ENCODE measurements at regions of chr1 and their contacts with region 1.

Region 1: GRCh38 chr1:17451731-17452130 is 12.3 kb upstream of the RCC2 start:
- DNase-seq: no peak
- ATAC-seq: no peak; the same call in 1 of the 2 replicates
- H3K4me3 ChIP-seq: no peak overlapping the region
- H3K27ac ChIP-seq: no peak overlapping the region
- H3K4me1 ChIP-seq: peaks cover 0 to 6% of the 10 kb centered on the region in 2 experiments; a peak in 1 of 4 replicates
- H3K27me3 ChIP-seq: no peaks in the 10 kb centered on the region
- CTCF ChIP-seq: no peak
- POLR2A ChIP-seq: no peak
- RAD21 ChIP-seq: no peak

Region 2: GRCh38 chr1:17119076-17119772 is 332.5 kb before region 1 on chr1 and contains the start of gene PADI2:
- CTCF ChIA-PET with region 1: no interaction called
- POLR2A ChIA-PET with region 1: no interaction called
- RAD21 ChIA-PET with region 1: no interaction called
- intact Hi-C with region 1: no loop called
- DNase-seq: peak; percentile 34
- ATAC-seq: peak; percentile 99
- H3K4me3 ChIP-seq: peak within 1 kb of the TSS in 1 of 2 experiments; percentile 45; a peak in 3 of 4 replicates
- H3K27ac ChIP-seq: no peak within 1 kb of the TSS
- H3K4me1 ChIP-seq: peaks cover 0 to 13% of the 10 kb centered on the region in 2 experiments; a peak in 3 of 4 replicates
- H3K27me3 ChIP-seq: no peaks in the 10 kb centered on the region; the same call in 1 of the 2 replicates
- CTCF ChIP-seq: no peak
- POLR2A ChIP-seq: no peak
- RAD21 ChIP-seq: no peak
- total RNA-seq, gene PADI2: 2.7 TPM

Region 3: GRCh38 chr1:17439250-17440073 is 12.3 kb before region 1 on chr1 and contains the start of gene RCC2:
- CTCF ChIA-PET with region 1: interaction called, 8 read pairs
- POLR2A ChIA-PET with region 1: interaction called, 18 read pairs
- RAD21 ChIA-PET with region 1: no interaction called
- intact Hi-C with region 1: no loop called
- DNase-seq: peak; percentile 43
- ATAC-seq: peak; percentile 76
- H3K4me3 ChIP-seq: peak within 1 kb of the TSS; percentile 94 to 98
- H3K27ac ChIP-seq: peak within 1 kb of the TSS; percentile 98
- H3K4me1 ChIP-seq: peaks cover 49 to 55% of the 10 kb centered on the region in 2 experiments
- H3K27me3 ChIP-seq: no peaks in the 10 kb centered on the region
- CTCF ChIP-seq: peak in 1 of 3 experiments; percentile 6; a peak in 1 of 6 replicates
- POLR2A ChIP-seq: peak; percentile 71
- RAD21 ChIP-seq: no peak
- total RNA-seq, gene RCC2: 178 TPM

Region 4: GRCh38 chr1:17494114-17494729 is 42.5 kb after region 1 on chr1:
- CTCF ChIA-PET with region 1: no interaction called
- POLR2A ChIA-PET with region 1: no interaction called
- RAD21 ChIA-PET with region 1: no interaction called
- intact Hi-C with region 1: no loop called
- DNase-seq: peak; percentile 86
- ATAC-seq: peak; percentile 94
- H3K4me3 ChIP-seq: no peak overlapping the region
- H3K27ac ChIP-seq: no peak overlapping the region
- H3K4me1 ChIP-seq: peaks cover 21 to 44% of the 10 kb centered on the region in 2 experiments; a peak in 3 of 4 replicates
- H3K27me3 ChIP-seq: no peaks in the 10 kb centered on the region
- CTCF ChIP-seq: peak; percentile 97 to 99 (median 98)
- POLR2A ChIP-seq: no peak
- RAD21 ChIP-seq: peak; percentile 98

Region 5: DNA sequence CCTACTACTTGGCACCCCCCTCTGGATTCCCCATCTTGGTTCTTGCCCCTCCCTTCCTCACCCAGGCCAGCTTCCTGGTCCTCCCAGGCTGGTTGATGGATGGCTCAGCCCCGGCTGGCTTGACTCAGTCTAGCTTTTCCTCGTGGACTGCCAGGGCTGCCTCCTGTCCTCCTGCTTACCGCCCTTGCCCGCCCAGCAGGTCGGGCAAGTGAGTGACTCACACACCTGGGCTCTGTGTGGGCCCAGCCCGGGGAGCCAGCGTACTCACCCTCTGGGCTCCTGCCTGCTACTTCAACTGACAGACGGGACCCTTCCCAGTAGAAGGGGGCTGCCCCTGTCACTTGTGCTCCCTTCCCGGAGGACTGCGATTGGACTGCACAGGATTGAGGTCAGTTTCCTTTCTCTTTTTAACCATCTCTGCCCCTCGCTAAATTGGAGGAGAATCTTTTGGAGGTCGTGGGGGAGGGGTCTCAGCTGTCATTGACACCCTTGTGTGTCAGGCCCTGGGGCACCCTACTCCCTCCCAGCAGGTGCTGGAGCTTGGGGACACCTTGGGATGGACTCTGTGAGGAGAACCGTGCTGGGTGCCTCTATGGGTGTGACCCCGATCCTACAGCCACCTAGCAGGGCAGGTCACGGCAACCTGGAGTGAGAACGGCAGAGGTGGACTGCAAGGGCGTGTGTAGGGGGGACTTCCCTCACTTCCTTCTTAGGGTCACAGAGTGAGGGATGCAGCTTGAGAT is 68.5 kb after region 1 on chr1:
- CTCF ChIA-PET with region 1: no interaction called
- POLR2A ChIA-PET with region 1: no interaction called
- RAD21 ChIA-PET with region 1: no interaction called
- intact Hi-C with region 1: no loop called
- DNase-seq: peak; percentile 80
- ATAC-seq: peak; percentile 88
- H3K4me3 ChIP-seq: peak overlapping the region; percentile 29 to 45
- H3K27ac ChIP-seq: peak overlapping the region; percentile 60
- H3K4me1 ChIP-seq: peaks cover 40 to 78% of the 10 kb centered on the region in 2 experiments
- H3K27me3 ChIP-seq: no peaks in the 10 kb centered on the region
- CTCF ChIP-seq: no peak
- POLR2A ChIP-seq: no peak
- RAD21 ChIP-seq: peak; percentile 24; the same call in 1 of the 2 replicates

Region 6: GRCh38 chr1:17661546-17662157 is 209.9 kb after region 1 on chr1:
- CTCF ChIA-PET with region 1: no interaction called
- POLR2A ChIA-PET with region 1: no interaction called
- RAD21 ChIA-PET with region 1: no interaction called
- intact Hi-C with region 1: no loop called
- DNase-seq: peak; percentile 12
- ATAC-seq: peak; percentile 83
- H3K4me3 ChIP-seq: no peak overlapping the region
- H3K27ac ChIP-seq: no peak overlapping the region
- H3K4me1 ChIP-seq: 0 out of 4 replicates have a peak, but pooled peaks cover 0 to 4% of the 10 kb centered on the region in 2 experiments
- H3K27me3 ChIP-seq: no peaks in the 10 kb centered on the region
- CTCF ChIP-seq: peak; percentile 64 to 95 (median 84)
- POLR2A ChIP-seq: no peak
- RAD21 ChIP-seq: peak; percentile 84